ENCODE measurements at regions of chr1 and their contacts with region 1.

Region 1: GRCh38 chr1:150259758-150260669 is 2.4 kb downstream of the CA14 start:
- DNase-seq: no peak
- ATAC-seq: no peak
- H3K4me3 ChIP-seq: no peak overlapping the region
- H3K27ac ChIP-seq: no peak overlapping the region
- H3K4me1 ChIP-seq: peaks cover 5% of the 10 kb centered on the region; the same call in 1 of the 2 replicates
- H3K27me3 ChIP-seq: no peaks in the 10 kb centered on the region; a peak in 2 of 4 replicates
- CTCF ChIP-seq: no peak
- EP300 ChIP-seq: no peak
- POLR2A ChIP-seq: no peak
- RAD21 ChIP-seq: no peak

Region 2: GRCh38 chr1:150207281-150207971 is 52.6 kb before region 1 on chr1:
- CTCF ChIA-PET with region 1: no interaction called
- POLR2A ChIA-PET with region 1: no interaction called
- RAD21 ChIA-PET with region 1: no interaction called
- SMC1A ChIA-PET with region 1: no interaction called
- in situ Hi-C with region 1: no loop called
- intact Hi-C with region 1: no loop called
- DNase-seq: no peak
- ATAC-seq: no peak
- H3K4me3 ChIP-seq: no peak overlapping the region
- H3K27ac ChIP-seq: no peak overlapping the region
- H3K4me1 ChIP-seq: no peaks in the 10 kb centered on the region
- H3K27me3 ChIP-seq: no peaks in the 10 kb centered on the region
- CTCF ChIP-seq: no peak
- EP300 ChIP-seq: no peak
- POLR2A ChIP-seq: no peak
- RAD21 ChIP-seq: no peak

Region 3: DNA sequence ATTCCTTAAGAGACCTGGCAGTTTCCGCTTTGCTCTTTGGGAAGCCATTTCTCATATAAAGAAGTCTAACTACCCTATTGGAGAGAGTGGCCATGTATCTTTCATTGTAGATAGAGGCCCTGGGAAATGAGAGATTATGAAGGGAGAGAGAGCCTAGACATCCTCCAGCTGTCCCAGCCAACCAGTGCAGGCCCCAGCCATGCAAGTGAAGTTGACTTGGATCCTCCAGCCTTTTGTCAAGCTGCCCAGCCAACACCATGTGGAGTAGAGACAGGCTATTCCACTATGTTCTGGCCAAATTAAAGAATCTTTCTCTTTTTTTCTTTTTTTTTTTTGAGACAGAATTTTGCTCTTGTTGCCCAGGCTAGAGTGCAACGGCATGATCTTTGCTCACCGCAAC is 17.0 kb before region 1 on chr1:
- CTCF ChIA-PET with region 1: interaction called, 12 read pairs
- POLR2A ChIA-PET with region 1: no interaction called
- RAD21 ChIA-PET with region 1: no interaction called
- SMC1A ChIA-PET with region 1: no interaction called
- in situ Hi-C with region 1: no loop called
- intact Hi-C with region 1: no loop called
- DNase-seq: no peak
- ATAC-seq: no peak
- H3K4me3 ChIP-seq: no peak overlapping the region
- H3K27ac ChIP-seq: no peak overlapping the region
- H3K4me1 ChIP-seq: no peaks in the 10 kb centered on the region
- H3K27me3 ChIP-seq: no peaks in the 10 kb centered on the region
- CTCF ChIP-seq: no peak
- EP300 ChIP-seq: no peak
- POLR2A ChIP-seq: no peak
- RAD21 ChIP-seq: no peak

Region 4: GRCh38 chr1:150288382-150288781 is 28.4 kb after region 1 on chr1:
- CTCF ChIA-PET with region 1: interaction called, 14 read pairs
- POLR2A ChIA-PET with region 1: no interaction called
- RAD21 ChIA-PET with region 1: interaction called, 3 read pairs
- SMC1A ChIA-PET with region 1: interaction called, 8 read pairs
- in situ Hi-C with region 1: no loop called
- intact Hi-C with region 1: no loop called
- DNase-seq: no peak
- ATAC-seq: no peak
- H3K4me3 ChIP-seq: no peak overlapping the region
- H3K27ac ChIP-seq: no peak overlapping the region
- H3K4me1 ChIP-seq: no peaks in the 10 kb centered on the region
- H3K27me3 ChIP-seq: no peaks in the 10 kb centered on the region
- CTCF ChIP-seq: no peak
- EP300 ChIP-seq: no peak
- POLR2A ChIP-seq: no peak
- RAD21 ChIP-seq: no peak

Region 5: GRCh38 chr1:150429805-150430204 is 169.8 kb after region 1 on chr1:
- CTCF ChIA-PET with region 1: no interaction called
- POLR2A ChIA-PET with region 1: no interaction called
- RAD21 ChIA-PET with region 1: interaction called, 7 read pairs
- SMC1A ChIA-PET with region 1: interaction called, 4 read pairs
- in situ Hi-C with region 1: no loop called
- intact Hi-C with region 1: loop called (anchors 5 kb)
- DNase-seq: no peak
- ATAC-seq: peak; percentile 61
- H3K4me3 ChIP-seq: no peak overlapping the region
- H3K27ac ChIP-seq: no peak overlapping the region
- H3K4me1 ChIP-seq: no peaks in the 10 kb centered on the region
- H3K27me3 ChIP-seq: no peaks in the 10 kb centered on the region
- CTCF ChIP-seq: peak; percentile 13 to 48 (median 19); a peak in 3 of 6 replicates
- EP300 ChIP-seq: no peak
- POLR2A ChIP-seq: no peak
- RAD21 ChIP-seq: peak; percentile 41; the same call in 1 of the 2 replicates

Region 6: GRCh38 chr1:150515328-150516048 is 255.5 kb after region 1 on chr1 and contains the start of gene FALEC:
- CTCF ChIA-PET with region 1: interaction called, 9 read pairs
- POLR2A ChIA-PET with region 1: no interaction called
- RAD21 ChIA-PET with region 1: interaction called, 4 read pairs
- SMC1A ChIA-PET with region 1: interaction called, 7 read pairs
- in situ Hi-C with region 1: no loop called
- intact Hi-C with region 1: loop called (anchors 5 kb)
- DNase-seq: peak; percentile 74
- ATAC-seq: peak; percentile 99
- H3K4me3 ChIP-seq: peak within 1 kb of the TSS; percentile 74
- H3K27ac ChIP-seq: peak within 1 kb of the TSS; percentile 50; the same call in 1 of the 2 replicates
- H3K4me1 ChIP-seq: peaks cover 17% of the 10 kb centered on the region
- H3K27me3 ChIP-seq: no peaks in the 10 kb centered on the region
- CTCF ChIP-seq: no peak
- EP300 ChIP-seq: no peak
- POLR2A ChIP-seq: peak; percentile 70
- RAD21 ChIP-seq: no peak
- polyA plus RNA-seq, gene FALEC: 0.21 TPM in 1 of 2 experiments, not detected in the other

Region 7: DNA sequence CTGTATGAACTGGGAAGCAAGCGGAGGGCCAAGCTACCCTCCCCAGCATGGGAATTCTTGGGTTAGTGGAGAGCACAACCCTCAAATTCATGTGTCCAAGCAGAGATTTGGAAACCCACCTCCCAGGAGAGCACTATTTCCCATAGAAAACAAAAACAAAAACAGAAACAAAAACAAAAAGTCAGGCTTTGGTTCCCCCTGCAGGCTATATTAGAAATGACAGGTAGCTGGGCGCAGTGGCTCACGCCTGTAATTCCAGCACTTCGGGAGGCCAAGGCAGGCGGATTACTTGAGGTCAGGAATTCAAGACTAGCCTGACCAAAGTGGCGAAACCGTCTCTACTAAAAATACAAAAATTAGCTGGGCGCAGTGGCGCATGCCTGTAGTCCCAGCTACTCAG is 735.9 kb after region 1 on chr1:
- CTCF ChIA-PET with region 1: interaction called, 17 read pairs
- POLR2A ChIA-PET with region 1: no interaction called
- RAD21 ChIA-PET with region 1: interaction called, 9 read pairs
- SMC1A ChIA-PET with region 1: no interaction called
- in situ Hi-C with region 1: loop called (anchors 5 kb)
- intact Hi-C with region 1: loop called (anchors 10 kb)
- DNase-seq: no peak
- ATAC-seq: peak; percentile 68
- H3K4me3 ChIP-seq: no peak overlapping the region
- H3K27ac ChIP-seq: no peak overlapping the region
- H3K4me1 ChIP-seq: no peaks in the 10 kb centered on the region
- H3K27me3 ChIP-seq: no peaks in the 10 kb centered on the region
- CTCF ChIP-seq: peak; percentile 46 to 59 (median 50)
- EP300 ChIP-seq: no peak
- POLR2A ChIP-seq: no peak
- RAD21 ChIP-seq: peak; percentile 56

Measured in GM12878 (cell line).